Kidney (tissue), 22 donors: ENCODE measurements at regions of chr1 and their contacts with region 1.

Region 1: DNA sequence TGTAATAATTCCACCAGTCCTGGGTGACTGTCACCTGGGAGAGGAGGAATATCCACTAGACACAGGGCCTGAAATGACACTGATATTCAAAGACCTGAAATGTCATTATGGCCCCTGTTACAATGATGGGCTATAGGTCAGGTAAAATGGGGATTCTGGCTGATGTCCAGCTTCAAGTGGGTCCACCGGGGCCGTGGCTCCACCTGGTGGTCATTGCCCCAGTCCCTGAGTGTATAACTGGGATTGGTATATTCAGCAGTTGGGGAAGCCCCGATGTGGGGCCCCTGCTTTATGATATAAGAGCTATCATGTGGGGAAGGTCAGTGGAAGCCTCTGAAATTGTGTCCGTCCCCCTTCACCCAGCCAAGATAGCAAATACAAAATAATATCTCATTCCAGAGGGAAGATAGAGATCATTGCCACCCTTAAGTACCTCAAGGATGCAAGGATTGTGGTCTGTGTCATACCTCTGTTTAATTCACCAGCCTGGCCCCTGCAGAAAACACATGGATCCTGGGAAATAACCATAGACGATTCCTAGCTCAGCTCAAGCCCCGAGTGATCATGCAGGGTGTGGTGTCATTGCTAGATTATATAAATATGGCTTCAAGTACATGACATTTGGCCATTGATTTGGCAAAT is 19.4 kb downstream of the PLEKHO1 start:
- DNase-seq: peak in 4 of 5 donors; percentile 70 to 78 (median 75)
- H3K4me3 ChIP-seq: no peak overlapping the region
- H3K27ac ChIP-seq: no peak overlapping the region
- H3K4me1 ChIP-seq: no peaks in the 10 kb centered on the region
- H3K27me3 ChIP-seq: no peaks in the 10 kb centered on the region
- CTCF ChIP-seq: peak; percentile 64

Region 2: GRCh38 chr1:150072959-150073358 is 96.1 kb before region 1 on chr1:
- intact Hi-C with region 1: loop called (anchors 5 kb)
- DNase-seq: peak in 2 of 5 donors; percentile 24 to 26
- H3K4me3 ChIP-seq: no peak overlapping the region
- H3K27ac ChIP-seq: no peak overlapping the region
- H3K4me1 ChIP-seq: peaks cover 0 to 8% (median 3%) of the 10 kb centered on the region in 3 donors
- H3K27me3 ChIP-seq: no peaks in the 10 kb centered on the region
- CTCF ChIP-seq: peak; percentile 20